Activated CD8-positive, alpha-beta T cell treated with anti-CD3 and anti-CD28 coated beads for 36 hours (primary cell): ENCODE measurements at regions of chr20 and their contacts with region 1.

Region 1: GRCh38 chr20:62793912-62794724 is 2.2 kb upstream of the MRGBP start:
- DNase-seq: peak; percentile 97
- ATAC-seq: peak; percentile 82
- H3K4me3 Mint-ChIP-seq: peak overlapping the region; percentile 83
- H3K27ac Mint-ChIP-seq: peak overlapping the region; percentile 91
- H3K4me1 Mint-ChIP-seq: peaks cover 34% of the 10 kb centered on the region
- H3K27me3 Mint-ChIP-seq: no peaks in the 10 kb centered on the region
- CTCF ChIP-seq: no peak

Region 2: GRCh38 chr20:62401331-62401779 is 392.8 kb before region 1 on chr20:
- CTCF ChIA-PET with region 1: no interaction called
- POLR2A ChIA-PET with region 1: no interaction called
- intact Hi-C with region 1: no loop called
- DNase-seq: no peak
- ATAC-seq: no peak
- H3K4me3 Mint-ChIP-seq: no peak overlapping the region
- H3K27ac Mint-ChIP-seq: no peak overlapping the region
- H3K4me1 Mint-ChIP-seq: peaks cover 18% of the 10 kb centered on the region
- H3K27me3 Mint-ChIP-seq: no peaks in the 10 kb centered on the region
- CTCF ChIP-seq: no peak

Region 3: GRCh38 chr20:62616728-62617621 is 177.1 kb before region 1 on chr20:
- CTCF ChIA-PET with region 1: interaction called, 18 read pairs
- POLR2A ChIA-PET with region 1: interaction called, 3 read pairs
- intact Hi-C with region 1: no loop called
- DNase-seq: peak; percentile 84
- ATAC-seq: peak; percentile 57
- H3K4me3 Mint-ChIP-seq: peak overlapping the region; percentile 52
- H3K27ac Mint-ChIP-seq: peak overlapping the region; percentile 93
- H3K4me1 Mint-ChIP-seq: peaks cover 36% of the 10 kb centered on the region
- H3K27me3 Mint-ChIP-seq: no peaks in the 10 kb centered on the region
- CTCF ChIP-seq: peak; percentile 99

Region 4: DNA sequence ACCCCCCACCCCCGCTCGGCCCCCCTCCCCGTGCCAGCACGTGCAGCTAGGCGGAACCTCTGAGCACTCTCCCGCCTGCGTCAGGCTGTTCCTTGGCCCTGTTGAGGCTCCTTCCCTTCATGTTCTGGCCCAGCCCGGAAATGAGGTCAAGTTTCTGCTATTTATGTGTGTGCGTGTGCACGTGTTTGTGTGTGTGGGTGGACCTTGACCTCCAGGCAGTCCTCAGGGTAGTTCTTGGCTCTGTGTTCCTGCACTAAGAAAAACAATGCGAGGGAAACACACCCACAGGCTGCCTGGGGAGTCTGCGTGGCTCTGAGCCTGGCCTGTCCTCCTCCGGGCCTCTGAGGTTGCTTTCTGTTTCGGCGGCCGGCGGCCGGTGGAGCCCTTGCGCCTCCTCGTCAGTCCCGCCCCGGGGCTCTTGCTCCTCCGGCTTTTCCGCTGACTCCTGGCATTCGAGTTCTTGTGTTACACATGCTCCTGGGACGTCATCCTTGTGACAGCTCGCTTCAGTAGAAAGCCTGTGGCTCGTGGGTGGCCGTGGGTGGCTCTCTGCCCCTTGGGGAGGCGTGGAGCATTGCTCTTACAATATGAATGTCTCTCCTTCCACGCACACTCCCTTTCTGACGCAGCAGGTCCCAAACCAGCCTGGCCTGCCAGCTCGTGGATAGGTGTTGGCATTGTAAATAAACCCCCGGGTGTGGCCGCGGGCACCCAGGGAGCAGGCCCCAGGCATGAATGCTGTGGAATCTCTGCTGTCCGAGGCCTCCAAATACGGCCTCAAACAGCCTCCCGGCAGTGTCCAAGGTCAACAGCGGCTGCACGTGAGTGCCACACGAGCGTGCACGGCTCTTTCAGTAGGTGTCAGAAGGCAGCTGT is 141.8 kb before region 1 on chr20:
- CTCF ChIA-PET with region 1: interaction called, 19 read pairs
- POLR2A ChIA-PET with region 1: interaction called, 4 read pairs
- intact Hi-C with region 1: loop called (anchors 10 kb)
- DNase-seq: peak; percentile 87
- ATAC-seq: peak; percentile 73
- H3K4me3 Mint-ChIP-seq: peak overlapping the region; percentile 62
- H3K27ac Mint-ChIP-seq: peak overlapping the region; percentile 94
- H3K4me1 Mint-ChIP-seq: peaks cover 39% of the 10 kb centered on the region
- H3K27me3 Mint-ChIP-seq: no peaks in the 10 kb centered on the region
- CTCF ChIP-seq: no peak

Region 5: GRCh38 chr20:62704301-62704948 is 89.7 kb before region 1 on chr20:
- CTCF ChIA-PET with region 1: interaction called, 19 read pairs
- POLR2A ChIA-PET with region 1: no interaction called
- intact Hi-C with region 1: no loop called
- DNase-seq: no peak
- ATAC-seq: no peak
- H3K4me3 Mint-ChIP-seq: no peak overlapping the region
- H3K27ac Mint-ChIP-seq: no peak overlapping the region
- H3K4me1 Mint-ChIP-seq: peaks cover 6% of the 10 kb centered on the region
- H3K27me3 Mint-ChIP-seq: peaks cover 16% of the 10 kb centered on the region
- CTCF ChIP-seq: no peak

Region 6: DNA sequence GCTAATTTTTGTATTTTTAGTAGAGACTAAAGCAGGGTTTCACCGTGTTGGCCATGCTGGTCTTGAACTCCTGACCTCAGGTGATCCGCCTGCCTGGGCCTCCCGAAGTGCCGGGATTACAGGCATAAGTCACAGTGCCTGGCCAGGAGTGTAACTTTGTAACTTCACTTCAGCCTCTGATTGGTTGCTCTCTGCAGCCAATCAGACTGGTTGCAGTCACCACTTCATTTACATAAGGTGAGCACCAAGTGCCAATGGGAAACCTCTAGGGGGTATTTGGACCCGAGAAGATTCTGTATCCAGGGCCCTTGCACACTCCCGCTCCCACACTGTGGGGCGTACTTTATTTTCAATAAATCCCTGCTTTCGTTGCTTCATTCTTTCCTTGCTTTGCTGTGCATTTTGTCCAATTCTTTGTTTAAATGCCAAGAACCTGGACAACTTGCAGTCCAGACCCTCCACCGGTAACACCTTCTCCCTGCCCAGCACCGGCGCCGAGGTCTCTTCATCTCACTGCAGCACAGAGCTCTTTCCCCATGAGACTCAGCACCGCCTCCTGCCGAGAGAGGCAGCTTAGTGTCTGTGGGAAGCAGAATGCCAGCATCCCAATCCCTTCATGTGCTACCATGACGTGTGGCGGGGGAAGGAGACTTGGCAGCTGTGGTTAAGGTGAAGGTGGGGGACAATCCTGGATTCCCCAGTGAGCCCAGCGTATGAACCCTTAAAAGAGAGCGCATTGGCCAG is 11.8 kb before region 1 on chr20:
- CTCF ChIA-PET with region 1: interaction called, 15 read pairs
- POLR2A ChIA-PET with region 1: no interaction called
- intact Hi-C with region 1: no loop called
- DNase-seq: no peak
- ATAC-seq: no peak
- H3K4me3 Mint-ChIP-seq: no peak overlapping the region
- H3K27ac Mint-ChIP-seq: no peak overlapping the region
- H3K4me1 Mint-ChIP-seq: peaks cover 5% of the 10 kb centered on the region
- H3K27me3 Mint-ChIP-seq: no peaks in the 10 kb centered on the region
- CTCF ChIP-seq: no peak